Panc1 (cell line): ENCODE measurements at regions of chr11 and their contacts with region 1.

Region 1: GRCh38 chr11:7442588-7443215 is 42.6 kb upstream of the OLFML1 start:
- DNase-seq: peak; percentile 56
- ATAC-seq: peak; percentile 92
- H3K4me3 ChIP-seq: no peak overlapping the region
- H3K27ac ChIP-seq: no peak overlapping the region
- H3K4me1 ChIP-seq: no peaks in the 10 kb centered on the region
- H3K27me3 ChIP-seq: peaks cover 2% of the 10 kb centered on the region; the same call in 1 of the 2 replicates
- CTCF ChIP-seq: peak; percentile 99

Region 2: GRCh38 chr11:7143908-7144307 is 298.8 kb before region 1 on chr11:
- CTCF ChIA-PET with region 1: no interaction called
- POLR2A ChIA-PET with region 1: no interaction called
- in situ Hi-C with region 1: no loop called
- intact Hi-C with region 1: loop called (anchors 10 kb)
- DNase-seq: peak; percentile 43
- ATAC-seq: peak; percentile 74
- H3K4me3 ChIP-seq: no peak overlapping the region
- H3K27ac ChIP-seq: no peak overlapping the region
- H3K4me1 ChIP-seq: no peaks in the 10 kb centered on the region
- H3K27me3 ChIP-seq: 0 out of 2 replicates have a peak, but pooled peaks cover 9% of the 10 kb centered on the region
- CTCF ChIP-seq: peak; percentile 66; the same call in 1 of the 2 replicates

Region 3: GRCh38 chr11:7319501-7319900 is 123.2 kb before region 1 on chr11:
- CTCF ChIA-PET with region 1: interaction called, 11 read pairs
- POLR2A ChIA-PET with region 1: no interaction called
- in situ Hi-C with region 1: no loop called
- intact Hi-C with region 1: no loop called
- DNase-seq: no peak
- ATAC-seq: no peak
- H3K4me3 ChIP-seq: no peak overlapping the region
- H3K27ac ChIP-seq: no peak overlapping the region
- H3K4me1 ChIP-seq: no peaks in the 10 kb centered on the region
- H3K27me3 ChIP-seq: no peaks in the 10 kb centered on the region
- CTCF ChIP-seq: no peak

Region 4: GRCh38 chr11:7353100-7353499 is 89.6 kb before region 1 on chr11:
- CTCF ChIA-PET with region 1: interaction called, 7 read pairs
- POLR2A ChIA-PET with region 1: no interaction called
- in situ Hi-C with region 1: no loop called
- intact Hi-C with region 1: loop called (anchors 2 kb)
- DNase-seq: peak; percentile 32
- ATAC-seq: peak; percentile 88
- H3K4me3 ChIP-seq: no peak overlapping the region
- H3K27ac ChIP-seq: no peak overlapping the region
- H3K4me1 ChIP-seq: no peaks in the 10 kb centered on the region
- H3K27me3 ChIP-seq: no peaks in the 10 kb centered on the region
- CTCF ChIP-seq: peak; percentile 88

Region 5: GRCh38 chr11:7480113-7480512 is 37.4 kb after region 1 on chr11:
- CTCF ChIA-PET with region 1: no interaction called
- POLR2A ChIA-PET with region 1: no interaction called
- in situ Hi-C with region 1: no loop called
- intact Hi-C with region 1: no loop called
- DNase-seq: no peak
- ATAC-seq: no peak
- H3K4me3 ChIP-seq: no peak overlapping the region
- H3K27ac ChIP-seq: no peak overlapping the region
- H3K4me1 ChIP-seq: no peaks in the 10 kb centered on the region
- H3K27me3 ChIP-seq: peaks cover 10% of the 10 kb centered on the region
- CTCF ChIP-seq: no peak

Region 6: GRCh38 chr11:7621090-7621489 is 178.4 kb after region 1 on chr11:
- CTCF ChIA-PET with region 1: no interaction called
- POLR2A ChIA-PET with region 1: no interaction called
- in situ Hi-C with region 1: no loop called
- intact Hi-C with region 1: no loop called
- DNase-seq: no peak
- ATAC-seq: no peak
- H3K4me3 ChIP-seq: no peak overlapping the region
- H3K27ac ChIP-seq: no peak overlapping the region
- H3K4me1 ChIP-seq: no peaks in the 10 kb centered on the region
- H3K27me3 ChIP-seq: no peaks in the 10 kb centered on the region
- CTCF ChIP-seq: no peak